ENCODE measurements at regions of chr3 and their contacts with region 1.

Region 1: DNA sequence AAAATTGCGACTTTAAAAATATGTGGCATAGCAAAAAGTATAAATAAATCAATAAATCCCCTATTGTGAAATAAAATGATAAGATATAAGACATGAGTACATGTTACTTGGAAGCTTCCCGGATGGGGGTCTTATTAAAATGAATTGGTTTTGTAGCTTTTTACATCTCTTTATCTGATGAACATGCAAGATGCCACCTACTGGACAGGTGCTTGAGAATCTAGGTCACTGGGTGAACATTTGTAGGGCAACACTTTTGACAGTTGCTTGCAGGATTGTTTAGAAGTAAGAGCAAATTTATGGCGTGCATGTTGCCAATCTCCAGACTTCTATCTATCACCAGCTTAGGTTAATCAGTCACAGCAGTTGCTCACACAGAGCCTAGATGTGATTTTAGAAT is 362.7 kb upstream of the SUCLG2 start:
- DNase-seq: peak; percentile 8
- ATAC-seq: no peak
- H3K4me3 ChIP-seq: no peak overlapping the region
- H3K27ac ChIP-seq: no peak overlapping the region
- H3K4me1 ChIP-seq: no peaks in the 10 kb centered on the region
- H3K27me3 ChIP-seq: no peaks in the 10 kb centered on the region
- CTCF ChIP-seq: 0 out of 2 replicates have a peak, but pooled peaks have one; percentile 11
- EP300 ChIP-seq: no peak
- POLR2A ChIP-seq: no peak
- RAD21 ChIP-seq: no peak

Region 2: DNA sequence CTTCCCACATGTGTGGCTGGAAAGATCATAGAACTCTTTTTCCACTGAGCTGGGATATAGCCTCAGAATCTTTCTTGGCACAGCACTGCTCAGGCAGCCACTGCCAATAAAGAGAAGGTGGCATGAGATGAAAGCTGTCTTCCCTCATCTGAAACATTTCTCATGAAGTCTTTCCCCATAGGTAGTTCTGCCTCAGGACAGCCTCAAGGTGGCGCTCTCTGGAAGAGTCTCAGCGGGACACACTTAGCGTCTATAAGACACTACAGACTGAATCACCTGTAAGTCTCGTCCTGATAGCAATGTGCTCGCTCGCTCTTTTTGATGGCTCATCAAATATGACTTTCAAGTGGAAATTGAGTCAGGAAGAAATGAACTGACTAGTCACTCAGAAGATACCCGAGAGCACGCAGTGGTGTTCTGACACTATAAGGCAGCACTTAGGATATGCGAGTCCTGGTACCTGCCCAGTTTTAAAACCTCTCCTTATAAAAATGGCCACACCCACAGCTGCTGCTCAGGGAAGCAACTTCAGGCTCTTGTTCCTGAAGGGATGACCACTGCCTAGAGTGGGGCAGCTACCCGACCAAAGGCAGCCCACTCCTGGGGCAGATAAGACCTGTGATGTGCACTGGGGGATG is 632.2 kb before region 1 on chr3:
- CTCF ChIA-PET with region 1: no interaction called
- POLR2A ChIA-PET with region 1: no interaction called
- in situ Hi-C with region 1: no loop called
- intact Hi-C with region 1: loop called (anchors 5 kb)
- DNase-seq: peak; percentile 23
- ATAC-seq: peak; percentile 82
- H3K4me3 ChIP-seq: no peak overlapping the region
- H3K27ac ChIP-seq: no peak overlapping the region
- H3K4me1 ChIP-seq: no peaks in the 10 kb centered on the region
- H3K27me3 ChIP-seq: no peaks in the 10 kb centered on the region
- CTCF ChIP-seq: peak; percentile 64
- EP300 ChIP-seq: no peak
- POLR2A ChIP-seq: no peak
- RAD21 ChIP-seq: no peak

Region 3: GRCh38 chr3:68033867-68034266 is 16.8 kb after region 1 on chr3:
- CTCF ChIA-PET with region 1: no interaction called
- POLR2A ChIA-PET with region 1: no interaction called
- in situ Hi-C with region 1: no loop called
- intact Hi-C with region 1: no loop called
- DNase-seq: no peak
- ATAC-seq: peak; percentile 22; the same call in 2 of the 3 replicates
- H3K4me3 ChIP-seq: no peak overlapping the region
- H3K27ac ChIP-seq: no peak overlapping the region
- H3K4me1 ChIP-seq: 0 out of 2 replicates have a peak, but pooled peaks cover 5% of the 10 kb centered on the region
- H3K27me3 ChIP-seq: no peaks in the 10 kb centered on the region
- CTCF ChIP-seq: no peak
- EP300 ChIP-seq: no peak
- POLR2A ChIP-seq: no peak
- RAD21 ChIP-seq: no peak

Measured in HepG2 (cell line).